Activated CD4-positive, alpha-beta memory T cell treated with anti-CD3 and anti-CD28 coated beads for 36 hours (primary cell): ENCODE measurements at regions of chr1 and their contacts with region 1.

Region 1: GRCh38 chr1:84853741-84854721 is 39.0 kb downstream of the LPAR3 start:
- DNase-seq: peak; percentile 54
- H3K4me3 Mint-ChIP-seq: peak overlapping the region; percentile 4
- H3K27ac Mint-ChIP-seq: peak overlapping the region; percentile 32
- H3K4me1 Mint-ChIP-seq: peaks cover 29% of the 10 kb centered on the region
- H3K27me3 Mint-ChIP-seq: no peaks in the 10 kb centered on the region

Region 2: DNA sequence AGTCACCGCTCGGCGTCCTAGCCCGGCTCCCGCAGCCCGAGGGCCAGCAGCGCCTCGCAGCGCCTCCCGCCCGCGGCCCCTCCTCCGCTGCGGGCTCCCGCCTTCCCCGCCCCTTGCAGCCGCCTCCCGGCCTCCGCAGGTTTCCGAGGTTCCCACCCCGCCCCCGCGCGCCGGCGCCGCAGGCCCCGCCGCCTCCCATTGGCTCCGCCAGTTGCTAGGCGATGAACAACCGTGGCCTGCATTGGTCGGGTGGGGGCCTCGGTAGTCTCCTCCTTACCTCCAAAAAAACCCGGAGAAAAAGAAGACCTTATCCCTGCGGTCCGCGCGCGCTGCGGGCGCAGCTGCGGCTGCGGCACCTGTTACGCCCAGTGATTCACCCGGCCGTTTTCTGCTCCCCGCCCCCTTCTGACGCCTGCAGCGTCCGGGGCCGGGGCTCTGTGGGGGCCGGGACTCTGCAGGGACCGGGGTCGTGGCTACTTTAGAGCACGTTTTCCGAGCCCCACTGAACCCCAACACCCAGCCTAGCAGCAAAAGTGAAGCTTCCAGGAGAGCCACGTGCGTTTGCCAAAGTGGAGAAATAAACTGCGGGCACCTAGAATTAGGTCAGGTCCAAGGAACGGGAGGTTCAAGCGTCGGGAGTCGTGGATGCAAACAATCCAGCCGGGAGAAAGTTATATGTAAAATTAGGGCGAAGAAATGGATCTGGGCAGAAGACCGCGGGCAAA is 163.5 kb before region 1 on chr1 and contains the start of gene SSX2IP:
- CTCF ChIA-PET with region 1: no interaction called
- POLR2A ChIA-PET with region 1: no interaction called
- intact Hi-C with region 1: loop called (anchors 10 kb)
- DNase-seq: peak; percentile 99
- H3K4me3 Mint-ChIP-seq: peak within 1 kb of the TSS; percentile 94
- H3K27ac Mint-ChIP-seq: peak within 1 kb of the TSS; percentile 80
- H3K4me1 Mint-ChIP-seq: peaks cover 53% of the 10 kb centered on the region
- H3K27me3 Mint-ChIP-seq: peaks cover 2% of the 10 kb centered on the region
- total RNA-seq, gene SSX2IP: 10.9 to 11.6 TPM